Activated CD8-positive, alpha-beta T cell treated with anti-CD3 and anti-CD28 coated beads, Interleukin-2, amount 10 ng/mL, durations not matched to agents 7 days and 5 days (primary cell): ENCODE measurements at regions of chr16 and their contacts with region 1.

Region 1: GRCh38 chr16:23877107-23878090 is 41.6 kb downstream of the PRKCB start:
- DNase-seq: no peak
- ATAC-seq: no peak
- H3K4me3 Mint-ChIP-seq: no peak overlapping the region
- H3K27ac Mint-ChIP-seq: no peak overlapping the region
- H3K4me1 Mint-ChIP-seq: peaks cover 78% of the 10 kb centered on the region
- H3K27me3 Mint-ChIP-seq: no peaks in the 10 kb centered on the region

Region 2: GRCh38 chr16:23826528-23827045 is 50.8 kb before region 1 on chr16:
- CTCF ChIA-PET with region 1: interaction called, 13 read pairs
- POLR2A ChIA-PET with region 1: no interaction called
- DNase-seq: peak; percentile 51
- ATAC-seq: peak; percentile 83
- H3K4me3 Mint-ChIP-seq: peak overlapping the region; percentile 51
- H3K27ac Mint-ChIP-seq: peak overlapping the region; percentile 86
- H3K4me1 Mint-ChIP-seq: peaks cover 30% of the 10 kb centered on the region
- H3K27me3 Mint-ChIP-seq: peaks cover 3% of the 10 kb centered on the region

Region 3: GRCh38 chr16:24036614-24037013 is 159.2 kb after region 1 on chr16:
- CTCF ChIA-PET with region 1: interaction called, 27 read pairs
- POLR2A ChIA-PET with region 1: no interaction called
- DNase-seq: peak; percentile 47
- ATAC-seq: peak; percentile 41
- H3K4me3 Mint-ChIP-seq: peak overlapping the region; percentile 26
- H3K27ac Mint-ChIP-seq: peak overlapping the region; percentile 22
- H3K4me1 Mint-ChIP-seq: peaks cover 56% of the 10 kb centered on the region
- H3K27me3 Mint-ChIP-seq: no peaks in the 10 kb centered on the region